ENCODE measurements at regions of chr14 and their contacts with region 1.

Region 1: GRCh38 chr14:55446218-55446654 is 5.8 kb upstream of the TBPL2 start:
- ATAC-seq: peak in 6 of 8 experiments; percentile 34 to 84 (median 44)
- H3K4me3 ChIP-seq: no peak overlapping the region
- H3K27ac ChIP-seq: no peak overlapping the region
- H3K4me1 ChIP-seq: no peaks in the 10 kb centered on the region

Region 2: DNA sequence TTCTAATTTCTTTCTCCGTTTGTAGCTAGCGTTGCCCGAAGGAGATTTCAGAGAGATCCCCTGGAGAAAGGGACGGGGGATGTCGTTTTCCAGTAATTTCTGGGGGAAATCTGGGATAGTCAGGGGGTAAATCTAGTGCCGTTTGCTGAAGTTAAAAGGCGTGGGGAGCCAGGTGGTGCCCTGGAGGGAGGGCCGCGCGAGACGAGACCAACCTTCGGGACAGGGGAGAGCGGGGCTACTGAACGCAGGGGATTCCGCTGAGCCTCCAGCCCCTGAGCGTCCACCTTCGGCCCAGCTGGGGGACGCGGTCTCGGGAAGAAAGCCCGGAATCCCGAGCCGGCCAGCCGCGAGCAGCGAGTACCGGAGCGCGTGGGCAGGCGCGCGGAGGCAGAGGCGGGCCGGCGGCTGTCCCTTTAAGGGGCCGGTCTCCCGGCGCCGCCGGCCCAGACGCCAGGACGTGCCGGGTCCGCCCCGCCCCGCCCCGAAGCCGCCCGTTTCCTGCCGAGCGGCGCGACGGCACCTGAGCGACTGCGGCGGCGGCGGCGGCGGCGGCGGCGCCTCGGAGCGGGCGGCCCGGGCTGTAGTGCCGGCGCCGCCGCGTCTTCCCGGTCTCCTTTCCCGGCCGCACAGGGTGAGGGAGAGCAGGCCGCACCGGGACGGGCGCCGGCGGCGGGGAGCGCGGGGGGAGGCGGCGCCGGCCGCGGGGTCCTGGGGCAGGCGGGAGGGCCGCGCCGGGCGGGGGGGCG is 133.7 kb after region 1 on chr14 and contains the start of gene KTN1:
- in situ Hi-C with region 1: loop called in 1 of 9 experiments (anchors 25 kb)
- ATAC-seq: peak; percentile 78 to 92 (median 88)
- H3K4me3 ChIP-seq: peak within 1 kb of the TSS; percentile 65 to 94 (median 73)
- H3K27ac ChIP-seq: peak within 1 kb of the TSS; percentile 76 to 90
- H3K4me1 ChIP-seq: peaks cover 10 to 16% of the 10 kb centered on the region in 2 donors
- total RNA-seq, gene KTN1: 61.4 to 201 (median 93.5) TPM

Region 3: GRCh38 chr14:55851961-55852360 is 405.7 kb after region 1 on chr14:
- in situ Hi-C with region 1: no loop called
- ATAC-seq: no peak
- H3K4me3 ChIP-seq: no peak overlapping the region
- H3K27ac ChIP-seq: no peak overlapping the region
- H3K4me1 ChIP-seq: no peaks in the 10 kb centered on the region

Region 4: DNA sequence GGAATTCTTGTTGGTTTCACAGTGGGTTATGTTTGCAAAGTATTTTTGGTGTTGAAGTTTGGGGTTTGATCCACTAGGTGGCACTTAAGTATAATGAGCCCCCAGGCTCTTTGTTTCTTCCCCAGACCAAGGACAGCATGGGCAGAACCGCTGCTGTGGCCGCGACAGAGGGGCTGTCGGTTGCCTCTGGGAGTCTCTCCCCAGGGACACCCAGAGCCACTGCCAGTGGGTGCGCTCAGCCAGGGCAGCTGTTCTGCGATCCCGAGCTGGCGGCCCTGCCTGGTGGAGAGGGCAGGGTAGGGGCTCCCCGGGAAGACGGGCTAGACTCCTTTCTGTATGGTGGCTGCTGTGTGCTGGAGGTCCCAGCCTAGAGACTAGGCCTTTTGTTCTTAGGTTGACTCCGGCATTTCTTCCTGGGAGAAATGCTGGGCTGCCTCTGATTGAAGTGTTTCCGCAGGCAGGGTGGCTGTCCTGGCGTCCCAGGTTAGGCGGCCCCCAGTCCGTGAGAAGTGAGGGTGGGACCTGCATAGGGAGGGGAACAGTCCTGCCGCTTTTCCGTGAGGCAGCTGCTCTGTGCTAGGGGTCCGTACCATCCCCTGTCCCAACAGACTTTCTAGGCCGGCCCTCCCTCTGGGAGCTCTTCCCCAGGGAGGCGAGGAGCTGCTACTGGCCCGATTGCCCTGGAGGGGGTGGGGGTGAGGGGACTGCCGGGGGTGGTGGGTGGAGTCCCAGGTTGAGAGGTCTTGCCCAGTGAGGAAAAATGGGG is 418.8 kb after region 1 on chr14:
- in situ Hi-C with region 1: no loop called
- ATAC-seq: no peak
- H3K4me3 ChIP-seq: no peak overlapping the region
- H3K27ac ChIP-seq: no peak overlapping the region
- H3K4me1 ChIP-seq: peaks cover 0 to 3% of the 10 kb centered on the region in 2 donors

Region 5: DNA sequence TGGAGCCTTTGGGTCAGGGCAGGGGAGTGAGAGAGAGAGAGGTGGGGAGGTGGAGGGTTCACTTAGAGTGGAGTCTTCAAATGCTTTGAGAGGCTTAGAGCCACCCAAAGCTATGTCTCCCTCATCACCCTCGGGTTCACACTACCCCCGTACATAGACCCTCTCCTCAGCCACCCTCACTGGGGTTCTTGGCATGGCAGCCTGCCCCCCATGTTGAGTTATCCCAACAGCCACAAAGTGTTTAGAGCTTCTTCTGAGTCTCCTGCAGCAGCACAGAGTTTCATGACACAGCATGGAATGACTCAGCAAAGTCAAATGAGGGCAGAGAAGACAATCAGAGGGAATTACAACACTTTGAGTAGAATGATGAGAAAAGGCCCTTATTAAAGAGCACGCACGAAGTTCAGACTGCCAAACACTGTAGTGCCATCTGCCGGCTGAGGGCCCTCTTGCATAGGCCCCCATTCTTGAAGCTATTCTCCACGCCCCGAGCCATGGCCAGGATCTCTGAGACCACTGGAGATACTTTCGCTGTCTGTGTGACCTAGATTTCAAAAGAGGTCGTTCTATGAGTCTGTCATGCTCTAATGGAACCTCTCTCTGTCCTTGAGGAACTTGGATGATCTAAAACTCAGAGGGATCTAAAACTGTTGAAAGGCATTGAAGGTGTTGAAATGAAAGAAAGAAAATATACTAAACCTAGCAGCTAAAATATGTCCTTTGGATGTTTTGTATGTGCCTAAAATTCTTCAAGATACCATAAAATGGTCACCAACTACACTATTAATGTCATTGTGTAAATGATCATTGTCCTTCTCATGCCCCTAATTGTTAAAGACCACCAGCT is 893.8 kb after region 1 on chr14:
- in situ Hi-C with region 1: loop called in 1 of 9 experiments (anchors 25 kb)
- ATAC-seq: peak; percentile 76 to 99 (median 94)
- H3K4me3 ChIP-seq: no peak overlapping the region
- H3K27ac ChIP-seq: no peak overlapping the region
- H3K4me1 ChIP-seq: peaks cover 22% of the 10 kb centered on the region in 2 donors

Measured in motor neuron (in vitro differentiated cells).